B cell (primary cell): ENCODE measurements at regions of chr14 and their contacts with region 1.

Region 1: DNA sequence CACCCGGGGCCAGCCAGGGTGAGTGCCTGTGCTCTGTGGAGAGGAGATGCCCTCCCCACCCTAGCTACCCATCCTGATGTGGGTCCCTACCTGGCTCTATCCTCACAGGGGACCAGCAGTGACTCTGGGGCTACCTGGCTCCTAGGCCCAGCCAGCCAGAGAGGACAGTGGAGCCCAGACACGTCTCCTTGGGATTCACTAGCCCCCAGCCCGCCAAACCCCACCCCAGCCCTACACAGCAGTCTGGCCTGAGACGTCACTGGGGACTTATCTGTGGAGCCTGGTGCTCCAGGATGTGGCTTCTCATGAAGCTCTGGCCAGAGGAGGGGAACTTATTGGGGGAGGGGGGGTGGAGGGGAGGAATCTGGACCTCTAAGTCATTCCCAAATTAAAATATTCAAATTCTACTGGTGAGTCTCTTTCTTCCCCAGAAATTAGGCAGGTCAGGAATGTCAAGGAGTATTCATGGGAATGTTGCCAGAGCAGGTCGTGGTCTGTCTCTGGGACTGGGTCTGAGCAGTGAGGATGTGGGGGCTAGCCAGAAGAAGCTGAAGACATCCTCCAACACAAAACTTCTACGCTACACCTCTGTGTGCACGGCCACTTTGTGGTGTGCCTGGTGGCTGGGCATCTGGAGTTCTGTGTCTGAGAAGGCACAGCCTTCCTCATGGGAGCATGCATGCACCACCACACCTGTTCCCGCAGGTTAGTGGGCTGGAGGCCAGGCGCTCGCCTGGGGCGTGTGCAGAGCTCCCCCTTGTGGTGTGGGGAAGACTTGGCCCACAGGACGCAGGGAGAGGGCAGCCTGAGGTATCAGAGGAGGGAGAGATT is 2.7 kb downstream of the CMTM5 start:
- DNase-seq: peak; percentile 74
- ATAC-seq: peak; percentile 87
- H3K4me3 ChIP-seq: no peak overlapping the region
- H3K4me3 Mint-ChIP-seq: no peak overlapping the region
- H3K27ac ChIP-seq: no peak overlapping the region
- H3K27ac Mint-ChIP-seq: no peak overlapping the region
- H3K4me1 ChIP-seq: no peaks in the 10 kb centered on the region
- H3K4me1 Mint-ChIP-seq: no peaks in the 10 kb centered on the region
- H3K27me3 ChIP-seq: peaks cover 0 to 16% (median 0%) of the 10 kb centered on the region in 4 experiments
- H3K27me3 Mint-ChIP-seq: peaks cover 25% of the 10 kb centered on the region
- CTCF ChIP-seq: peak; percentile 91

Region 2: GRCh38 chr14:22955702-22956569 is 423.6 kb before region 1 on chr14:
- CTCF ChIA-PET with region 1: no interaction called
- POLR2A ChIA-PET with region 1: no interaction called
- intact Hi-C with region 1: no loop called
- DNase-seq: no peak
- ATAC-seq: no peak
- H3K4me3 ChIP-seq: peak overlapping the region; percentile 58 to 97 (median 84)
- H3K4me3 Mint-ChIP-seq: peak overlapping the region; percentile 93
- H3K27ac ChIP-seq: peak overlapping the region; percentile 76
- H3K27ac Mint-ChIP-seq: peak overlapping the region; percentile 89
- H3K4me1 ChIP-seq: peaks cover 11 to 16% of the 10 kb centered on the region in 2 donors
- H3K4me1 Mint-ChIP-seq: peaks cover 21% of the 10 kb centered on the region
- H3K27me3 ChIP-seq: no peaks in the 10 kb centered on the region
- H3K27me3 Mint-ChIP-seq: no peaks in the 10 kb centered on the region
- CTCF ChIP-seq: no peak

Region 3: GRCh38 chr14:23068476-23069412 is 310.8 kb before region 1 on chr14:
- CTCF ChIA-PET with region 1: interaction called, 11 read pairs
- POLR2A ChIA-PET with region 1: interaction called, 5 read pairs
- intact Hi-C with region 1: no loop called
- DNase-seq: peak; percentile 87
- ATAC-seq: peak; percentile 85
- H3K4me3 ChIP-seq: no peak overlapping the region
- H3K4me3 Mint-ChIP-seq: no peak overlapping the region
- H3K27ac ChIP-seq: peak overlapping the region; percentile 10 to 28
- H3K27ac Mint-ChIP-seq: peak overlapping the region; percentile 83
- H3K4me1 ChIP-seq: peaks cover 21 to 41% of the 10 kb centered on the region in 2 donors
- H3K4me1 Mint-ChIP-seq: peaks cover 38% of the 10 kb centered on the region
- H3K27me3 ChIP-seq: no peaks in the 10 kb centered on the region
- H3K27me3 Mint-ChIP-seq: no peaks in the 10 kb centered on the region
- CTCF ChIP-seq: peak; percentile 99

Region 4: GRCh38 chr14:23269193-23269592 is 110.4 kb before region 1 on chr14:
- CTCF ChIA-PET with region 1: interaction called, 129 read pairs
- POLR2A ChIA-PET with region 1: no interaction called
- intact Hi-C with region 1: no loop called
- DNase-seq: no peak
- ATAC-seq: no peak
- H3K4me3 ChIP-seq: no peak overlapping the region
- H3K4me3 Mint-ChIP-seq: no peak overlapping the region
- H3K27ac ChIP-seq: no peak overlapping the region
- H3K27ac Mint-ChIP-seq: no peak overlapping the region
- H3K4me1 ChIP-seq: no peaks in the 10 kb centered on the region
- H3K4me1 Mint-ChIP-seq: no peaks in the 10 kb centered on the region
- H3K27me3 ChIP-seq: no peaks in the 10 kb centered on the region
- H3K27me3 Mint-ChIP-seq: peaks cover 13% of the 10 kb centered on the region
- CTCF ChIP-seq: no peak

Region 5: GRCh38 chr14:23281247-23281646 is 98.3 kb before region 1 on chr14:
- CTCF ChIA-PET with region 1: interaction called, 10 read pairs
- POLR2A ChIA-PET with region 1: no interaction called
- intact Hi-C with region 1: no loop called
- DNase-seq: no peak
- ATAC-seq: no peak
- H3K4me3 ChIP-seq: no peak overlapping the region
- H3K4me3 Mint-ChIP-seq: no peak overlapping the region
- H3K27ac ChIP-seq: no peak overlapping the region
- H3K27ac Mint-ChIP-seq: no peak overlapping the region
- H3K4me1 ChIP-seq: peaks cover 8 to 10% of the 10 kb centered on the region in 2 donors
- H3K4me1 Mint-ChIP-seq: peaks cover 14% of the 10 kb centered on the region
- H3K27me3 ChIP-seq: no peaks in the 10 kb centered on the region
- H3K27me3 Mint-ChIP-seq: no peaks in the 10 kb centered on the region
- CTCF ChIP-seq: no peak

Region 6: DNA sequence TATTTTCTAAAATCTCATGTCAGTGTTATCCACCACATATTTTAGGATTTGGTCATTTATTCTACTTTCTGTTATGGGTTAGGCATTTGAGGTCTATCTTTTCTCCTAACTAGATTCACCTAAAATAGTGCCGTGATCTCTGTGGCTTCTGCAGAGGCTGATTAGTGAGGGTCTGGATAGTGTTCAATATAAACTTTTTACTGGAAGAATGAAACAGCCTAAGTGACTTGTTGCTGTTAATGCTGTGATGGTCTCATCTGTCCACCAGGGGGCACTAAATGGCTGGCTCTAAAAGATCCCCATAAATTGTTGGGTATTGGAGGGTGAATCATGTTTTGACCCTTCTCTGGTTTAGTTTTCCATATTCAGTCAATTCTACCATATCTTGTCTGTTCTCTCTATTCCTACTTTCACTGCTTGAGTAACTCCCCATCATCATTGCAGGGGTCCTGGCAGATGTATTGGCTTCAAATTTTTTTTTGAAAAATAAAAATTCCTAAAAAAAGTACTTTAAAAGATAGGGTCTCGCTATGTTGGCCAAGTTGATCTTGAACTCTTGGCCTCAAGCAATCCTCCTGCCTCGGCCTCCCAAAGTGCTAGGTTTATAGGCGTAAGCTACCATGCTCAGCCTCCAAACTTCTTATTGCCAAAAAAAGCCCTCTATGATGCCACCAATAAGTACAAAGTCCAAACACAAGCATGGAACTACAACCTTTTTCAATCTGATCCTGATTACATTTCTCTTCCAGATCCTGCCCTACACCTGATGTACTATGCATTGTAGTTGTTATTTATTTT is 51.4 kb before region 1 on chr14:
- CTCF ChIA-PET with region 1: interaction called, 24 read pairs
- POLR2A ChIA-PET with region 1: no interaction called
- intact Hi-C with region 1: no loop called
- DNase-seq: peak; percentile 77
- ATAC-seq: peak; percentile 80
- H3K4me3 ChIP-seq: no peak overlapping the region
- H3K4me3 Mint-ChIP-seq: no peak overlapping the region
- H3K27ac ChIP-seq: no peak overlapping the region
- H3K27ac Mint-ChIP-seq: peak overlapping the region; percentile 2
- H3K4me1 ChIP-seq: peaks cover 1% of the 10 kb centered on the region in 2 donors
- H3K4me1 Mint-ChIP-seq: peaks cover 7% of the 10 kb centered on the region
- H3K27me3 ChIP-seq: peaks cover 0 to 2% (median 0%) of the 10 kb centered on the region in 4 experiments
- H3K27me3 Mint-ChIP-seq: peaks cover 3% of the 10 kb centered on the region
- CTCF ChIP-seq: peak; percentile 95

Region 7: DNA sequence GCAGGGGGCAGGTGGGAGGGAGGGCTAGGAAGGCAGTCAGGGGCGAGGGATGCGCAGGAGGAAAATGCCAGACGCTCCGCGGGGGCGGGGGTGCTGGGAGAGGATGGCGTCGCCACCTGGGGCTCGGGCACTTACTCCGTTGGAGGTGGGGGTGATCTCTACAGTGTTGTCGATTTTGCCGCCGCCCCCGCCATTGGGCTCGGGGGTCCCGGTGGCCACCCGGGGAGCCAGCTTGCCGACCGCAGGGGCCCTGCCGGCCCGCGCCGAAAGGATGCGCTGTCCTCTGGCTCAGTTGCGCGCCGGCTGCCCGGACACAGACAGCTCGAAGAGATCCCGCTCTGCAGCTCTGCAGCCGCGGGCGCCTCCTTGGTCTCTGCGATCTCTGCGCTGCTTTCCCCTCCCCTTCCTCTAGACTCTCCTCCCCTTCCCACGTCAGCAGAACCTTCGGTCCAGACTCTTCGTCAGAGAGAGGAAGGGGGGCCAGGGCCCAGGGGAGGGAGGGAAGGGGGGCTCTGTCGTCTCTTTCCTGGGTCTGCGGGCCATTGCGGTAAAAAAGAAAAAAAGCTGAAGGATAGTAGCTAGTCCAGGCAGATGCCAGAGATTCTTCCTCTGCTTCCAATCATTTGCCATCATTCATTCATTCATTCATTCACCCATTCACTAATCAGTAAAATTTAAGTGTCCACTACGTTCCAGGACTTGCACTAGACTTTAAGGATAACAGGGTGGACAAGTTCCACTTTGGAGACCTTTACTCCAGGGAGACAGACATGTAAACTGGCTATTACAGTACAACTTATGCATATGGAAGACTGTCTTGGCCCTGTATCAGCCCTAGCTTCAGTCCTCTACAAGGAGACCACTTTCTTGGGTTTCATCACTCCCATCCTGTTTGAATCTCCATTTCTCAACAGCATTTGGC is 26.8 kb before region 1 on chr14 and contains the start of gene SLC22A17:
- CTCF ChIA-PET with region 1: interaction called, 12 read pairs
- POLR2A ChIA-PET with region 1: no interaction called
- intact Hi-C with region 1: no loop called
- DNase-seq: peak; percentile 60
- ATAC-seq: peak; percentile 75
- H3K4me3 ChIP-seq: peak within 1 kb of the TSS in 4 of 5 experiments; percentile 15 to 52 (median 44)
- H3K4me3 Mint-ChIP-seq: peak within 1 kb of the TSS; percentile 85
- H3K27ac ChIP-seq: no peak within 1 kb of the TSS
- H3K27ac Mint-ChIP-seq: no peak within 1 kb of the TSS
- H3K4me1 ChIP-seq: peaks cover 11 to 15% of the 10 kb centered on the region in 2 donors
- H3K4me1 Mint-ChIP-seq: peaks cover 14% of the 10 kb centered on the region
- H3K27me3 ChIP-seq: peaks cover 0 to 57% (median 28%) of the 10 kb centered on the region in 4 experiments
- H3K27me3 Mint-ChIP-seq: peaks cover 59% of the 10 kb centered on the region
- CTCF ChIP-seq: no peak
- total RNA-seq, gene SLC22A17: 0.89 and 0.97 TPM in 2 replicates